Natural killer cell (primary cell): ENCODE measurements at regions of chr12 and their contacts with region 1.

Region 1: DNA sequence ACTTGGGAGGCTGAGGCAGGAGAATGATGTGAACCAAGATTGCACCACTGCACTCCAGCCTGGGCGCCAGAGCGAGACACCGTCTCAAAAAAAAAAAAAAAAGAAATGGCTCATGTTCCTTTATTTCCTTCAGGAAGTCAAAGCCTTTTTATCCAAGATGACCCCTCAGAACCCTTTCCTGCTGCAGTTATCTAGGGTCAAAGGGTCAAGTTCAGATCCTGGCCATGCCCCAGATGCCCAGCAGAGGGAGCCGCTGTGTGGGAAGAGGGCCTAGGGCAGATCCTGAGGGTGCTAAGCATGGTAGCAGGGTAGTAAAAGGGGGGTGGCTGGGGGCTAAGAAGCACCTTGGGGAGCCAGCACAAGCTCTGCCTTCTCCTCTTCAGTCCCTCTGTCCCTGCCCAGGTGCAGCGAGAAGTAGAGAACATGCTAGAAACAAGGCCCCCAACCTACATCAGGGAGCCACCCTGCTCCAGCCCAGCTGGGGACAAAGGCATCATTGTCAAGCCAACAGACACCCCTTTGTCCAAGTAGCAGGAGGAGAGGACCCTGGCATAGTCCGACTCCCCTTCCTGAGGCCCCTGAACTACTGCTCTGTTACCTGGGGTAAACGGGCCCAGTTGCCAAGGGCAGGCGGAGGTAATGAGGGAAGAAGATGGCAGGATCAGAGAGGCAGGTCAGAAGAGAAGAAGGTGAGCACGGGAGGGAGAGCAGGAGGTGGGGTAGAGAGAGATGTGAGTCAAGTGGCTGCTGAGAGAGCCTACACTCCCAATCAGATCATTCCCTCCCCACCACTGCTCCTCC is 6.5 kb downstream of the NFE2 start:
- DNase-seq: peak; percentile 55 to 72
- ATAC-seq: peak; percentile 72 to 94 (median 80)
- H3K4me3 ChIP-seq: no peak overlapping the region
- H3K4me3 Mint-ChIP-seq: no peak overlapping the region
- H3K27ac ChIP-seq: no peak overlapping the region
- H3K27ac Mint-ChIP-seq: peak overlapping the region in 1 of 2 donors; percentile 27
- H3K4me1 ChIP-seq: peaks cover 18% of the 10 kb centered on the region
- H3K4me1 Mint-ChIP-seq: peaks cover 16 to 32% of the 10 kb centered on the region in 2 donors
- H3K27me3 ChIP-seq: no peaks in the 10 kb centered on the region
- H3K27me3 Mint-ChIP-seq: peaks cover 4% of the 10 kb centered on the region in 2 donors
- CTCF ChIP-seq: peak; percentile 68

Region 2: DNA sequence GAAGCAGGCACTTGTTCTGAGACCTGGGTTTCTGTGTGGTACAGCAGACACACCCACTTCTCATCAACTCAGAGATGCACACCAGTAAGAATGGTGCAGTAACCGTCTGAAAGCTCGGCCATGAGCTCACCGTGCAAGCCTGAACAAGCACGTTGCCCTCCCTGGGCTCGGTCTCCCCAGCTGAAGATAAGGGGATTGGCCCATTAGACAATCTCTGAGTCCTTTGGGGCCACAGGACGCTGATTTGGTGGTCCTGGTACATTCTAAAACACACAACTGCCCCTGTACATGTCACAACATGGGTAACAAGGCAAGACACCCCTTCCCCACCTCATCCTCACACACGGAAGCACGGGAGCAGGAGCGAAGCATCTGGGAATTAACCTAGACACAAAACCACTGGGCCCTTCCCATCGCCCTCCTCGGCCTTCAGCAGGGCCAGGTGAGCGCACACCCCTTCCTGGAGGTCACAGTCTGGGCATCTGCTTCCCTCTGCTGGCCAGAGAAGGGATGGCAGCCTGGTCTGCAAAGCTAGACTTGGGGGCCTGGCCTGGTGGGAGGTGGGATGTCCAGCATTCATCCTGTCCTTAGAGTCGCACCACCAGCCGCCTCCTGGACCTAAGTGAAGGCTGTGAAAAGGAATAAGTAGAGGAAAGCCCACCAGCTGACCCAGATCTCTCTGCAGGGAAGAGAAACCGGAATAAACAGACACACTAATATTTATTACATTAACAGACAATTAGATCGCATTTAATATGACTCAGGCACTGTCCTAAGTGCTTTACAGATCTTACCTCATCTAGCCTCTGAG is 86.7 kb before region 1 on chr12:
- intact Hi-C with region 1: no loop called
- DNase-seq: peak; percentile 75 to 86
- ATAC-seq: peak; percentile 82 to 100 (median 97)
- H3K4me3 ChIP-seq: no peak overlapping the region
- H3K4me3 Mint-ChIP-seq: no peak overlapping the region
- H3K27ac ChIP-seq: no peak overlapping the region
- H3K27ac Mint-ChIP-seq: no peak overlapping the region
- H3K4me1 ChIP-seq: peaks cover 3% of the 10 kb centered on the region
- H3K4me1 Mint-ChIP-seq: peaks cover 5 to 10% of the 10 kb centered on the region in 2 donors
- H3K27me3 ChIP-seq: peaks cover 4% of the 10 kb centered on the region
- H3K27me3 Mint-ChIP-seq: peaks cover 31 to 36% of the 10 kb centered on the region in 2 donors
- CTCF ChIP-seq: peak; percentile 86

Region 3: DNA sequence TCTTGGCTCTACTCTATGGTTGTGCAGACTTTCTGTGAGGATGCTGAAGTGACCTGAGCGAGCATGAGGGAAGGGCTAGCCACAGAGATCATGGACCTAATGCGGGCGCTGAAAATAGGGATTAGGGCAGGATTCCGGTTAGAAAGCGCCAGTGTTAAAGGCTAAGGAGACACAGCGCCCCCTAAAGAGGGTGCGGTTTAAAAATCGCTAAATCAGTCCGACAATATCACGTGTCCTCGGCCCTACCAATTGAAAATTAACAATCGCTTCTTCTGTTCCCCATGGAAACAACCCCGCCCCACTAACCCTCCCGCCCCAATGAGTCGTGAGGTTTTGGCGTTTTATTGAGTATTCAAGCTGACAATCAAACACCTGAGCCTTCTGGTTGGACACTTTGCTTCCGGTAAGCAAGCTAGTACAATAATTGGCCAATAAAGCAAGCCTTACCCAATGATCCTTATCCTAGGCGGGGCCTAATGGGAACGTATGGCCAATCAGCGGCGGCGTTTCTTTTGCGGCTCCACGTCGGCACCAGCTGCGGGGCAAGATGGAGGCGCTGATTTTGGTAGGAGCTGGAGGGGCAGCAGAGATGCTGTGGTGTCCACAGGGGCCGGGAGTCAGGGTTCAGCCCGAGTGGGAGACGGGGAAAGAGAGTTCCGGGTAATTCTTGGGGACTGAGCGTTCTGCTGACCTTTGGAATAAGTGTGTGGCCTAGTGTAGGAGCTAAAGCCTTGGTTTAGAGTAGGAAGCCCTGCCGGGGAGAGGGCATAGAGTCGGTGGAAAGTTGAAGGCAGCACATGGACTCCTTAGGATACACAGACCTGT is 30.5 kb after region 1 on chr12 and contains the start of gene COPZ1:
- intact Hi-C with region 1: loop called (anchors 1 kb)
- DNase-seq: peak; percentile 89 to 97
- ATAC-seq: peak; percentile 93 to 98 (median 93)
- H3K4me3 ChIP-seq: peak within 1 kb of the TSS; percentile 65
- H3K4me3 Mint-ChIP-seq: peak within 1 kb of the TSS; percentile 100
- H3K27ac ChIP-seq: peak within 1 kb of the TSS; percentile 77
- H3K27ac Mint-ChIP-seq: peak within 1 kb of the TSS; percentile 99
- H3K4me1 ChIP-seq: peaks cover 15% of the 10 kb centered on the region
- H3K4me1 Mint-ChIP-seq: peaks cover 21 to 42% of the 10 kb centered on the region in 2 donors
- H3K27me3 ChIP-seq: no peaks in the 10 kb centered on the region
- H3K27me3 Mint-ChIP-seq: no peaks in the 10 kb centered on the region
- CTCF ChIP-seq: peak; percentile 90
- total RNA-seq, gene COPZ1: 66.3 to 83.6 (median 79.7) TPM

Region 4: DNA sequence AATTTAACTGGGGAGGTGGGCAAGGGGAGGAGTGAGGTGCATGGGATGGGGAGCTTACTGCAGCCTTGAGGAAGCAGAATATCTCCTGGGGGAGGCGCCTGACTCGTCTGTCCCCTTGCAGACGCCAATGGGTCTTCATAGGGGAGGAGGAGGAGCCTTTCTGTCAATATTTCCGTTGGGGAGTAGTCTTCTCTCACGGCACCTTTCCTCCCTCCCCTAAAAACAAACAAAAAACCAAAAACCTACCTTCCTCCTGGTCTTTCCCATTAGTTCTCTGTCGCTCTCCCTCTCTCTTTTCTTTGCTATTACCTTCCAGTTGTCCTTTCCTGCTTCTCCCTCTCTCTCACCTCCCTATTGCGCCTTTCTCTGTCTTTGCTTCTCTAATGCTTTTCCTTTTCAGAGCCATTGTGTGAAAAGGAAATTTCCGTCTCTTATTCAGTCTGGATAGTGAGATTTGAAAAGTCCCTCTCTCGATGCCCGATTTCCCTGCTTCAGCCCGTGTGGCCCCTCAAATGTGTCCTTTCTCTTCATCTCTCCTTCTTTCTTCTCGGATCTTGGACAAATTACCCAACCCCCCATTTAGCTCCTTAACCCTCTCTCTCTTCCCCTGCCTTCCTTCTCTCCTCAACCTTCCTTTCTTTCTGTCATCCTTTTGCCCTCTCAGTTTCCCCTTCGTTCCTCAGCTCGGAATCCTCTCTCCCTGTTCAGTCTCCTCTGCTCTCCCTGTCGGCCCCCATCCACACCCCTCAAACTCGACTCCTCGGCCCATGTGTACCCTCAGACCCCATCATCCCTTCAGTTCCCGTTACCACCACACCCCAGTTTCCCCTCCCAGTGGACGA is 64.1 kb after region 1 on chr12:
- intact Hi-C with region 1: no loop called
- DNase-seq: peak in 1 of 2 donors; percentile 73
- ATAC-seq: no peak
- H3K4me3 ChIP-seq: peak overlapping the region; percentile 90
- H3K4me3 Mint-ChIP-seq: no peak overlapping the region
- H3K27ac ChIP-seq: peak overlapping the region; percentile 76
- H3K27ac Mint-ChIP-seq: no peak overlapping the region
- H3K4me1 ChIP-seq: peaks cover 28% of the 10 kb centered on the region
- H3K4me1 Mint-ChIP-seq: peaks cover 0 to 4% of the 10 kb centered on the region in 2 donors
- H3K27me3 ChIP-seq: no peaks in the 10 kb centered on the region
- H3K27me3 Mint-ChIP-seq: peaks cover 0 to 3% of the 10 kb centered on the region in 2 donors
- CTCF ChIP-seq: no peak

Region 5: DNA sequence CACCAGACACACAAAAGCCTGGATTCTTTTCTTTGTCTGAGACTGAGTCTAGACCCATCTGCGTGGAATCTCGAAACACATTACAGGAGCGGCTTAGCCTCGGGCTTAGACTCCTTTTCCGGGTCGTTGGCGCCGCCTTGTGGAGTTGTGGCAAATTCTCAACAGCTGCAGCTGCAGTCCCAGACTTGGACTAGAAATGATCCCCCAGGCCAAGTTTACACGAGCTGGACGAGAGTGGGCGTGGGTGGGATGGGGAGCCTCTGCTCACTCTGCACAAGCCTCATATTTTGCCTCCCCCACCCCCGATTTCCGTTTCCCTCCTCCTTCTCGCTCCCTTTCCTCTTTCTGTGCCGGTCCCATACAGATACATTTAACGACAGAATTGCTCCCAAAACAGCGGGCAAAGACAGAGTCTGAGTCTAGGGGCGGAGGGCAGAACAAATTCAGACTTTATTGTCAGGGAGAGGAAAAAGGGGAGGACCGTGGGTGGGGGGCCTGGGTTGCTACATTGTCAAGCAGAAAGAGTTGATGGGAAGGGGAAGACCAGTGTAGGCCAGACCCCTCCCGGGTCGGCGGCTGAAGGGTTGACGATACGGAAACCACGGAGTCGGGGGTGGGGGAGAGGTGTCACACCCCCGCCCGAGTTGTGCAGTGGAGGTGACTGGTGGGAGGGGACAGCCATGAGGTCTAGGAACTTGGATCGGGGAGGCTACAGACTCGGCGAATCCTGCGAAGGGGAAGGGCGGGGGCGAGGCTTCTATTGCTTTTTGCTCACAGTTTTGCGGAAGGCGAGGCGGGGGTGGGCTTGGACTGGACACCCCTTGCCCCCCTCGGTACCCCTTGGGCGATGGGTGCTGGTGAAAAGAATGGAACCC is 74.6 kb after region 1 on chr12:
- intact Hi-C with region 1: loop called (anchors 1 kb)
- DNase-seq: peak; percentile 83 to 93
- ATAC-seq: peak; percentile 88 to 98 (median 92)
- H3K4me3 ChIP-seq: no peak overlapping the region
- H3K4me3 Mint-ChIP-seq: peak overlapping the region; percentile 86
- H3K27ac ChIP-seq: no peak overlapping the region
- H3K27ac Mint-ChIP-seq: peak overlapping the region; percentile 62 to 66
- H3K4me1 ChIP-seq: peaks cover 22% of the 10 kb centered on the region
- H3K4me1 Mint-ChIP-seq: peaks cover 23 to 29% of the 10 kb centered on the region in 2 donors
- H3K27me3 ChIP-seq: no peaks in the 10 kb centered on the region
- H3K27me3 Mint-ChIP-seq: no peaks in the 10 kb centered on the region
- CTCF ChIP-seq: peak; percentile 86

Region 6: DNA sequence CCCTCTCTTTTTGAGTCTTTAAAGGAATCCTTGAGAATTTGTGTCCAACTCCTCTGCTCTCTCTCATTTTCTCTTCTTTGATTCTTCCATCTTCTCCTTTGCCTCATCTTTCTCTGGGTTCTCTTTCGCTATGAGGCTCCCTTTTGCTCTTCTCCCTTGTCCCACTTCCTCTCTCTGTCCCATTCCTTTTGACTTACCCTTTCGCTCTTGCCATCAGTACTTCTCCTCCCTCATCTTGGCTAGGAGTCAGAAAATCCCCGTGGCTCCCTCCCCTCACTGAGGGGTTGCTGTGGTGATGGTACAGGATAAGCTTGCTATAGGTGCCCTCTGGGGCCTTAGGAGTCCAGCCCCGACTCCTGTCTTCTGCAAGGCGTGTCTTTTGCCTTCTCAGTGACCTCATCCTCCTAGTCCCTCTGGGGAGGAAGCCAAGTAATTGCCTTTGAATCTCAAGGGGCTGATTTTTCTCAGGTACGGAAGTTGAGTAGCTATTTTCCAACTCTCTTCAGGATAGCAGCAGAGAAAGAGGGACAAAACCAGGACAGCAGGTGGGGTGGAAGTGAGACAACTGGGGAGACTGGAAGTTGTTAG is 261.4 kb after region 1 on chr12:
- intact Hi-C with region 1: no loop called
- DNase-seq: no peak
- ATAC-seq: no peak
- H3K4me3 ChIP-seq: no peak overlapping the region
- H3K4me3 Mint-ChIP-seq: no peak overlapping the region
- H3K27ac ChIP-seq: no peak overlapping the region
- H3K27ac Mint-ChIP-seq: no peak overlapping the region
- H3K4me1 ChIP-seq: peaks cover 10% of the 10 kb centered on the region
- H3K4me1 Mint-ChIP-seq: peaks cover 9 to 16% of the 10 kb centered on the region in 2 donors
- H3K27me3 ChIP-seq: no peaks in the 10 kb centered on the region
- H3K27me3 Mint-ChIP-seq: peaks cover under 1 to 3% of the 10 kb centered on the region in 2 donors
- CTCF ChIP-seq: no peak